Dorsolateral prefrontal cortex (tissue), 120 donors: ENCODE measurements at regions of chr9 and their contacts with region 1.

Region 1: DNA sequence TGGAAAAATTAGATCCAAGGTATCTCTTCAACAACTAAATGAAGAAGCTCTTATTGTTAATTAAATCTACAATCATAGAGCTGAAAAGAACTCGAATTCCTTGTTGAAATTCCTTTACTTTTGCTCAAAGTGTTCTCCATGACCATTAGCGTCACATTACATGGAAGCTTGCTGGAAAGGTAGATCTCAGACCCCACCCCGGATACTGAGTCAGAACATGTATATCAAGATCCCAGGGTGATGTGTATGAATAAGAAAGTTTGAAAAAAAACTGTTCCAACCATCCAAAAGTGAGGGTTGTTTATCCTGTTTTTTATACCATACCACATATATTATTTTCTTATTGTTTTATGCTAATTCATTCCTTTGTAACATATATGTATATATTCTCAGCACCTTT is 237.1 kb upstream of the PUM3 start:
- DNase-seq: no peak
- H3K4me3 ChIP-seq: no peak overlapping the region
- H3K27ac ChIP-seq: no peak overlapping the region
- H3K27me3 ChIP-seq: no peaks in the 10 kb centered on the region
- CTCF ChIP-seq: no peak

Region 2: DNA sequence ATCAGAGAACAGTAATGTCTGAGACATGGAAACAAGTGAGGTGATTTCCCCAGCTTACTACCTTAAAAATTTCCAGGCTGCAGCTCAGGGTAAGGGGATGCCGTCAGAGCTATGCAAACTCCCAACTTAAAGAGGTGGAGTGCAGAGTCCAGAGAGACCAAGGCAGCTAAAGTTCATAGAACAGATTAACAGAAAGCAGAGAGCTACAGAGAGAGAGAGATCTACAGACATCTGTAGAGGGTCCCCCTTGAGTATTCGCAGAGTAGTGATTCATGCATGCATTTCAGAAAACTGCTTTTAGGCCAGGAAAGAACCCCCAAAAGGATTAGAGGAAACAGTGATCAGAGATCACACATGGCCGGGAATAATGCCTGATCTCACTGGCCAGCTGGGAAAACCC is 69.1 kb after region 1 on chr9:
- intact Hi-C with region 1: loop called in 1 of 2 experiments (anchors 5 kb)
- DNase-seq: no peak
- H3K4me3 ChIP-seq: no peak overlapping the region
- H3K27ac ChIP-seq: no peak overlapping the region
- H3K27me3 ChIP-seq: peaks cover 0 to 4% (median 0%) of the 10 kb centered on the region in 45 donors
- CTCF ChIP-seq: no peak